H1 (cell line): ENCODE measurements at regions of chr12 and their contacts with region 1.

Region 1: DNA sequence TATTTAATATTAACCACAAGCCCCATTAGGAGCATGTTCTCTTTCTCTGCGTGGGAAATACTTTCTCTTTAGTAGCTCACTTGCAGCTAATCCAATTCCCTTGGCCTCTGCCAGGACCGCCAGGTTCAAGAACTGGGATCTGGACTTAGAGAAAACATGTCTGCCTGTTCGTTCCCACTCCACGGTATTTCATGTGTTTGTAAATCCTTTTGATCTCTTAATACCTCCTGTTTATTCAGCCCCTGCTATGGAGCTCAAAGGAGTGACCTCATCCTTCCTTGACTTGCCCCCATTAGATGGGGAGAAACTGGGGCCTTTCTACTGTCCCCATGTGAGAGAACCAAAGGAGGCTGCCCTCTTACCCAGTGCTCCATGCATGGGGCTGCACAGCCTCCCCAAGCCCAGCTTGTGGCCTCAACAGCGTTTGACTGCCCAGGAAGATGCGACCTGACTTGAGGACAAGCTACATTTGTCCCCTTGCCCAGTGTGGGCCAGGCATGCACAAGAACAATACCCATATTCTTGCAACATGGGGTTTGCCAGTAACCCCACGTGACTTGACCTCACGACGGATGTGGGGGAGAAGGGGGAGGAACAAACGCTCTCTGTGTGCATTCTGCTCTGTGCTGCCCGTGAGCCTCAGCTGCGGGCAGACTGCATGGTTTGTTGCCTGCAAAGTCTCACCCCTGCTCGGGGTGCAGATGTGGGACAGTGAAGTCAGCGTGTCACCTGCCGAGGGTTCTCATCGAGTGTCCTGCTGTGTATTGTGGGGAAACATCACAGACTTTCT is 30.3 kb downstream of the CD9 start:
- DNase-seq: no peak
- H3K4me3 ChIP-seq: no peak overlapping the region
- H3K27ac ChIP-seq: no peak overlapping the region
- H3K4me1 ChIP-seq: peaks cover 0 to 7% (median 4%) of the 10 kb centered on the region in 4 experiments; a peak in 6 of 7 replicates
- H3K27me3 ChIP-seq: no peaks in the 10 kb centered on the region
- CTCF ChIP-seq: no peak
- EP300 ChIP-seq: no peak
- POLR2A ChIP-seq: no peak
- RAD21 ChIP-seq: no peak

Region 2: DNA sequence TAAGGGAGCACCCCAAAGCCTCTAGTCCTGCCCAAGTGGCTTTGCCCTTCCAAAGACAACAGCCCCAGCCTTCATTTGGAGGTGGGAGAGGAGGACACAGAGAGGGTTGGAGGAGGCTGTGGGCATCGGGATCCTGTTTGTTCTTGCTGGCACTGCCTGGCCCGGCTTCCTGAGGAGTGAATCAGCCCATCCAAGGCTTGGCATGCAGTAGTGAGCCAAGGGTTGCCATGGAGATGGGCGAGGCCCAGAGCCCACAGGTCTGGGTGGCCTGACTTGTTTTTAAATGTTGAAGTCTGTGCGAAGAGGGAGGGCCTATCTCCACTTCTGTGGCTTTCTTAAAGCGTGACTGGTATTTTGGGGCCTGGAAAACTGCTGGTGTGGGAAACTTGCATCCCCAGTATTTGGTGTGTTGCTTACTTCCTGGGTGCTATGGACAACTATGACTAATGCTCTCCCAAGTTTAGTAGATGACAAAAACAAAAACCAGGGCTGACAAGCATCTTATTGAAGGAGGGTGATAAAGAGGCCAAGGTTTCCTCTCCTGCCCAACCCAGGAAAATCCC is 14.5 kb before region 1 on chr12:
- CTCF ChIA-PET with region 1: interaction called, 8 read pairs
- POLR2A ChIA-PET with region 1: interaction called, 51 read pairs
- DNase-seq: no peak
- H3K4me3 ChIP-seq: peak overlapping the region in 1 of 4 experiments; percentile 23; a peak in 1 of 8 replicates
- H3K27ac ChIP-seq: peak overlapping the region; percentile 79
- H3K4me1 ChIP-seq: peaks cover 28 to 50% (median 43%) of the 10 kb centered on the region in 4 experiments
- H3K27me3 ChIP-seq: no peaks in the 10 kb centered on the region; a peak in 1 of 7 replicates
- CTCF ChIP-seq: no peak
- EP300 ChIP-seq: no peak
- POLR2A ChIP-seq: no peak
- RAD21 ChIP-seq: no peak